Common myeloid progenitor, CD34-positive (primary cell): ENCODE measurements at regions of chr3 and their contacts with region 1.

Region 1: DNA sequence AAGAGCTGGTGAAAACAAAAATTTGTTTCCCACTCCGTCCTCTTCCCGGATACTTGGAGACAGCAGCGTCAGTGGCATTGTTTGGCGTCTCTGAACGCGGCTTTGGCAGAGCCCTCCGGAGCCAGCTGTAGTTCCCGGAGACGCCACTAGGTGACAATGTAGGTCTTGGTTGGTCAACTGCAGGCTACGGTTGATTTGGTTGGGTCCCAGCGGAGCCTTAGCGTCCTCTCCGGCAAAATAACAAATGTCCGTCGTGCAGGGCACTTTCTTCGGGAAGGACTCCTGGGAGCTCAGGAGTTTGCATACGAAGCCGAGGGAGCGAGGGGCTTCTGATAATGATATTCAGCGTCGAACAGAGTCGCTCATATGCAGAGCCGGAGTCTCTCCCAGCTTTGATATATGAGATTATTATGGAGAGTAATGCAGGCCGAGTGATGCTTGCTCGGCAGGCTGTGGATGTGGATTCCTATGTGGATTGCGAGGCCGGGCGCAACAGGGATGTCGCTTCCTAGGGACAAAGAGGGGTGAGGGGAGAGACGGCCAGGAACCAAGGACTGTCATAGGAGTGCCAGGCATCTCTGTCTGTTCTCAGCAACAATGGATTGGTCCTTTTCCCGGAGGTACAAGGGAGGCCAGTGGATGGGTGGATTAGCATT is 74.8 kb downstream of the IL20RB start:
- DNase-seq: peak; percentile 58 to 79 (median 73)
- H3K4me3 ChIP-seq: peak overlapping the region in 6 of 7 experiments; percentile 28 to 80 (median 59)
- H3K27ac ChIP-seq: no peak overlapping the region
- H3K4me1 ChIP-seq: peaks cover 0 to 9% (median 5%) of the 10 kb centered on the region in 4 experiments
- H3K27me3 ChIP-seq: peaks cover 0 to 17% (median 6%) of the 10 kb centered on the region in 5 experiments

Region 2: GRCh38 chr3:137020315-137020714 is 12.3 kb before region 1 on chr3:
- CTCF ChIA-PET with region 1: interaction called, 12 read pairs
- POLR2A ChIA-PET with region 1: no interaction called
- DNase-seq: no peak
- H3K4me3 ChIP-seq: no peak overlapping the region
- H3K27ac ChIP-seq: no peak overlapping the region
- H3K4me1 ChIP-seq: peaks cover 0 to 9% (median 0%) of the 10 kb centered on the region in 4 experiments
- H3K27me3 ChIP-seq: peaks cover 0 to 1% (median 0%) of the 10 kb centered on the region in 5 experiments

Region 3: GRCh38 chr3:137047240-137047639 is 14.6 kb after region 1 on chr3:
- CTCF ChIA-PET with region 1: interaction called, 13 read pairs
- POLR2A ChIA-PET with region 1: no interaction called
- DNase-seq: no peak
- H3K4me3 ChIP-seq: no peak overlapping the region
- H3K27ac ChIP-seq: no peak overlapping the region
- H3K4me1 ChIP-seq: no peaks in the 10 kb centered on the region
- H3K27me3 ChIP-seq: no peaks in the 10 kb centered on the region

Region 4: DNA sequence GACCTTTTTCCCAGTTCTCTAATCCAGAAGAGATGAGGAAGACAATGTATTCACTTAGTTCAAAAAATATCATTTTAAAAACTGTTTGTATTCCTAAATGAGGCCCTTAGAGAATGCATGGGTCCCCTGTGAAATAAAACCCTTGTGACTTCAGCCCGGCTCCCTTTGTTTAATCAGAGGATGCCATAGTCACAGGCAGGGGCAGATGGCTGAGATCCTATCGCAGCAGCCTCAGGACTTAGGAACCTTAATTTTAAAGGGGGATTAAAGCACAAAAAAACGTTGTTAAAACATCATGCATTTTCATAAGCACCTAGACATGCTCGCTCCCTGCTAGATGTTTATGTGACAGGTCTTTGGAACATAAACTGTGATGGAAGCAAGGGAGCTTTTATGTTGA is 101.8 kb after region 1 on chr3:
- CTCF ChIA-PET with region 1: no interaction called
- POLR2A ChIA-PET with region 1: no interaction called
- DNase-seq: no peak
- H3K4me3 ChIP-seq: no peak overlapping the region
- H3K27ac ChIP-seq: no peak overlapping the region
- H3K4me1 ChIP-seq: no peaks in the 10 kb centered on the region
- H3K27me3 ChIP-seq: peaks cover 0 to 2% (median 0%) of the 10 kb centered on the region in 5 experiments